ENCODE measurements at regions of chr18 and their contacts with region 1.

Region 1: DNA sequence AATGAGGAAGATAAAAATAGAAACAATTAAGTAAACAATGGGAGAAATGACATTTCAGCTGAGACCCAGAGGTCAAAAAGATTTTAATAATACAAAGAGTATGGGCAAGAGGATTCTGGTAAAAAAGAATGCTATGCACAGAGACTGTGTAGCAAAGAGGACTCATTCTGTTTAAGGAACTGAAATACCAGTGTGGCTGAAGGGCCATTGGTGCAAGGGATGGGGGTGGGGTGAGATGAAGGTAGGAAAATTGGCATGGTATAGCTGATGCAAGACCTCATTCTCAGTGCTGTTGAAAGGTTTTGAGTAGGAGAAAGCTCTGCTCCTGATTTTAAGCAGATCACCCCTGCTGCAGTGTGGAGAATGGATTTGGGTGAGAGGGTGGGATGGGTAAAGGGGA is 10.8 kb downstream of the GALNT1 start:
- DNase-seq: no peak
- ATAC-seq: peak; percentile 16 to 63 (median 45)
- H3K4me3 ChIP-seq: no peak overlapping the region
- H3K27ac ChIP-seq: no peak overlapping the region
- H3K4me1 ChIP-seq: peaks cover 0 to 28% (median 15%) of the 10 kb centered on the region in 12 donors
- H3K27me3 ChIP-seq: no peaks in the 10 kb centered on the region
- CTCF ChIP-seq: no peak
- POLR2A ChIP-seq: no peak

Region 2: GRCh38 chr18:35549564-35549963 is 42.7 kb before region 1 on chr18:
- intact Hi-C with region 1: no loop called
- DNase-seq: no peak
- ATAC-seq: no peak
- H3K4me3 ChIP-seq: no peak overlapping the region
- H3K27ac ChIP-seq: no peak overlapping the region
- H3K4me1 ChIP-seq: no peaks in the 10 kb centered on the region
- H3K27me3 ChIP-seq: no peaks in the 10 kb centered on the region
- CTCF ChIP-seq: no peak
- POLR2A ChIP-seq: no peak

Region 3: DNA sequence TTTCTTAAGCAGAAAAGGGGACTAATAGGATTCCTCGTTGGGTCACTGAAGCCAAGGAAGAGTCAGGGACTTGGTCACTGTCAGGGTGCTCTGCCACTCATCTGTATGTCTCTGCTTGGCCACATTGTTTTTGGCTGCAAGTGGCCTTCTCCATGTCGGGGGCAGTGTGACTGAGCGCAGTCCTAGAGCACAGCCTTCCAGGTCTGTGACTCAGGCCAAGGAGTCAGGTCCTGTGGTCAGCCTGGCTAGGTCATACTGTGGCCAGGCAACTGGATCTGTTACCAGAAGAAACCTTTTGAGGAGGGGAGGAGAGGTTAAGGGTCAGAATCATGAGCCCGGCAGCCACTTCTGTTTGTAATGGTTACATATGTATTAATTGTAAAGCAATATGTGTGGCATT is 50.5 kb after region 1 on chr18:
- intact Hi-C with region 1: loop called in 2 of 10 experiments (anchors 10 kb)
- DNase-seq: no peak
- ATAC-seq: peak in 2 of 4 donors; percentile 15 to 24
- H3K4me3 ChIP-seq: no peak overlapping the region
- H3K27ac ChIP-seq: no peak overlapping the region
- H3K4me1 ChIP-seq: no peaks in the 10 kb centered on the region
- H3K27me3 ChIP-seq: no peaks in the 10 kb centered on the region
- CTCF ChIP-seq: no peak
- POLR2A ChIP-seq: no peak

Region 4: GRCh38 chr18:35827275-35827902 is 235.1 kb after region 1 on chr18:
- intact Hi-C with region 1: no loop called
- DNase-seq: no peak
- ATAC-seq: no peak
- H3K4me3 ChIP-seq: no peak overlapping the region
- H3K27ac ChIP-seq: no peak overlapping the region
- H3K4me1 ChIP-seq: no peaks in the 10 kb centered on the region
- H3K27me3 ChIP-seq: no peaks in the 10 kb centered on the region
- CTCF ChIP-seq: no peak
- POLR2A ChIP-seq: no peak

Region 5: DNA sequence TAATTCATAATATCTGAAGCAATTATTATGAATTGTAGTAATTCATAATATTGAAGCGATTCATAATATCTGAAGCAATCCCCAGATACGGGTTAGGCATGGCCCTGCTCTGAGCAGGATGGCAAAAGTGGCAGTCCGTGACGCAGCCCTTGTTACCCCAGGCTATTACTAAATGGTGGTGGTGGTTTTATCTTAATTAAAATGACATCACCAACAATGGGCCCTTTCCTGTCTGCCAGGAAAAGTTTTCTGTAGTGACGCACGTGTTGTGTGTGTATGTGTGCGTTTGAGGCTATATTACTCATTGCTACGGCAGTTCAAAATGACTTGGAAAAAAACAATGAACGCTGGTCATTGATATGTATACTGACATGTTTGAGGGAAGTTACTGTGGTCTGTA is 584.4 kb after region 1 on chr18:
- intact Hi-C with region 1: no loop called
- DNase-seq: no peak
- ATAC-seq: no peak
- H3K4me3 ChIP-seq: no peak overlapping the region
- H3K27ac ChIP-seq: no peak overlapping the region
- H3K4me1 ChIP-seq: peaks cover 0 to 15% (median 11%) of the 10 kb centered on the region in 12 donors
- H3K27me3 ChIP-seq: no peaks in the 10 kb centered on the region
- CTCF ChIP-seq: no peak
- POLR2A ChIP-seq: no peak